ENCODE measurements at regions of chr9 and their contacts with region 1.

Region 1: GRCh38 chr9:126490871-126491567 is 122.7 kb upstream of the LMX1B start:
- DNase-seq: peak; percentile 66
- H3K4me3 Mint-ChIP-seq: no peak overlapping the region
- H3K27ac Mint-ChIP-seq: no peak overlapping the region
- H3K4me1 Mint-ChIP-seq: no peaks in the 10 kb centered on the region
- H3K27me3 Mint-ChIP-seq: no peaks in the 10 kb centered on the region
- CTCF ChIP-seq: peak; percentile 92

Region 2: GRCh38 chr9:125407974-125408900 is 1082.8 kb before region 1 on chr9:
- CTCF ChIA-PET with region 1: interaction called, 10 read pairs
- POLR2A ChIA-PET with region 1: no interaction called
- intact Hi-C with region 1: loop called (anchors 5 kb)
- DNase-seq: peak; percentile 73
- H3K4me3 Mint-ChIP-seq: peak overlapping the region; percentile 57
- H3K27ac Mint-ChIP-seq: no peak overlapping the region
- H3K4me1 Mint-ChIP-seq: peaks cover 9% of the 10 kb centered on the region
- H3K27me3 Mint-ChIP-seq: peaks cover 14% of the 10 kb centered on the region
- CTCF ChIP-seq: peak; percentile 95

Region 3: GRCh38 chr9:126228781-126229444 is 262.1 kb before region 1 on chr9:
- CTCF ChIA-PET with region 1: interaction called, 6 read pairs
- POLR2A ChIA-PET with region 1: no interaction called
- intact Hi-C with region 1: loop called (anchors 5 kb)
- DNase-seq: peak; percentile 70
- H3K4me3 Mint-ChIP-seq: no peak overlapping the region
- H3K27ac Mint-ChIP-seq: no peak overlapping the region
- H3K4me1 Mint-ChIP-seq: no peaks in the 10 kb centered on the region
- H3K27me3 Mint-ChIP-seq: peaks cover 52% of the 10 kb centered on the region
- CTCF ChIP-seq: peak; percentile 98

Region 4: GRCh38 chr9:126301985-126302603 is 188.9 kb before region 1 on chr9:
- CTCF ChIA-PET with region 1: interaction called, 4 read pairs
- POLR2A ChIA-PET with region 1: no interaction called
- intact Hi-C with region 1: loop called (anchors 1 kb)
- DNase-seq: peak; percentile 64
- H3K4me3 Mint-ChIP-seq: no peak overlapping the region
- H3K27ac Mint-ChIP-seq: no peak overlapping the region
- H3K4me1 Mint-ChIP-seq: no peaks in the 10 kb centered on the region
- H3K27me3 Mint-ChIP-seq: peaks cover 11% of the 10 kb centered on the region
- CTCF ChIP-seq: peak; percentile 66

Region 5: GRCh38 chr9:126317513-126317912 is 173.5 kb before region 1 on chr9:
- CTCF ChIA-PET with region 1: interaction called, 5 read pairs
- POLR2A ChIA-PET with region 1: no interaction called
- intact Hi-C with region 1: loop called (anchors 5 kb)
- DNase-seq: no peak
- H3K4me3 Mint-ChIP-seq: no peak overlapping the region
- H3K27ac Mint-ChIP-seq: no peak overlapping the region
- H3K4me1 Mint-ChIP-seq: no peaks in the 10 kb centered on the region
- H3K27me3 Mint-ChIP-seq: no peaks in the 10 kb centered on the region
- CTCF ChIP-seq: no peak

Region 6: GRCh38 chr9:126398403-126399058 is 92.5 kb before region 1 on chr9:
- CTCF ChIA-PET with region 1: interaction called, 12 read pairs
- POLR2A ChIA-PET with region 1: no interaction called
- intact Hi-C with region 1: loop called (anchors 1 kb)
- DNase-seq: peak; percentile 68
- H3K4me3 Mint-ChIP-seq: no peak overlapping the region
- H3K27ac Mint-ChIP-seq: no peak overlapping the region
- H3K4me1 Mint-ChIP-seq: no peaks in the 10 kb centered on the region
- H3K27me3 Mint-ChIP-seq: no peaks in the 10 kb centered on the region
- CTCF ChIP-seq: peak; percentile 94

Region 7: GRCh38 chr9:126558051-126558665 is 67.1 kb after region 1 on chr9:
- CTCF ChIA-PET with region 1: interaction called, 217 read pairs
- POLR2A ChIA-PET with region 1: no interaction called
- intact Hi-C with region 1: no loop called
- DNase-seq: peak; percentile 74
- H3K4me3 Mint-ChIP-seq: no peak overlapping the region
- H3K27ac Mint-ChIP-seq: no peak overlapping the region
- H3K4me1 Mint-ChIP-seq: no peaks in the 10 kb centered on the region
- H3K27me3 Mint-ChIP-seq: peaks cover 34% of the 10 kb centered on the region
- CTCF ChIP-seq: peak; percentile 98

Measured in MCF 10A (cell line).